ENCODE measurements at regions of chr14 and their contacts with region 1.

Region 1: GRCh38 chr14:68824517-68825347 is 31.9 kb upstream of the ZFP36L1 start:
- DNase-seq: peak; percentile 91 to 97 (median 95)
- ATAC-seq: peak; percentile 94
- H3K4me3 ChIP-seq: no peak overlapping the region
- H3K27ac ChIP-seq: no peak overlapping the region
- H3K4me1 ChIP-seq: no peaks in the 10 kb centered on the region
- H3K27me3 ChIP-seq: no peaks in the 10 kb centered on the region

Region 2: GRCh38 chr14:67883717-67884116 is 941.0 kb before region 1 on chr14:
- intact Hi-C with region 1: loop called in 1 of 4 experiments (anchors 5 kb)
- DNase-seq: no peak
- ATAC-seq: no peak
- H3K4me3 ChIP-seq: no peak overlapping the region
- H3K27ac ChIP-seq: no peak overlapping the region
- H3K4me1 ChIP-seq: peaks cover 1% of the 10 kb centered on the region
- H3K27me3 ChIP-seq: no peaks in the 10 kb centered on the region

Region 3: GRCh38 chr14:67934862-67935261 is 889.9 kb before region 1 on chr14:
- intact Hi-C with region 1: loop called (anchors 2 to 5 kb)
- DNase-seq: no peak
- ATAC-seq: no peak
- H3K4me3 ChIP-seq: no peak overlapping the region
- H3K27ac ChIP-seq: no peak overlapping the region
- H3K4me1 ChIP-seq: no peaks in the 10 kb centered on the region
- H3K27me3 ChIP-seq: no peaks in the 10 kb centered on the region

Measured in right cardiac atrium (tissue), 5 donors.